CD4-positive, alpha-beta T cell (primary cell): ENCODE measurements at regions of chr6 and their contacts with region 1.

Region 1: GRCh38 chr6:167291623-167292300 is 647 bp downstream of the UNC93A start:
- DNase-seq: no peak
- ATAC-seq: no peak
- H3K4me3 ChIP-seq: no peak overlapping the region
- H3K4me3 Mint-ChIP-seq: no peak overlapping the region
- H3K27ac ChIP-seq: no peak overlapping the region
- H3K27ac Mint-ChIP-seq: no peak overlapping the region
- H3K4me1 ChIP-seq: no peaks in the 10 kb centered on the region
- H3K4me1 Mint-ChIP-seq: peaks cover 3% of the 10 kb centered on the region
- H3K27me3 ChIP-seq: no peaks in the 10 kb centered on the region
- H3K27me3 Mint-ChIP-seq: peaks cover 4% of the 10 kb centered on the region
- CTCF ChIP-seq: no peak

Region 2: GRCh38 chr6:167056370-167056769 is 235.4 kb before region 1 on chr6:
- CTCF ChIA-PET with region 1: no interaction called
- POLR2A ChIA-PET with region 1: no interaction called
- intact Hi-C with region 1: no loop called
- DNase-seq: peak in 5 of 14 experiments; percentile 23 to 81 (median 71)
- ATAC-seq: peak; percentile 87
- H3K4me3 ChIP-seq: no peak overlapping the region
- H3K4me3 Mint-ChIP-seq: peak overlapping the region; percentile 68
- H3K27ac ChIP-seq: no peak overlapping the region
- H3K27ac Mint-ChIP-seq: peak overlapping the region; percentile 84
- H3K4me1 ChIP-seq: peaks cover 49% of the 10 kb centered on the region
- H3K4me1 Mint-ChIP-seq: peaks cover 59% of the 10 kb centered on the region
- H3K27me3 ChIP-seq: no peaks in the 10 kb centered on the region
- H3K27me3 Mint-ChIP-seq: no peaks in the 10 kb centered on the region
- CTCF ChIP-seq: no peak

Region 3: GRCh38 chr6:167079853-167080297 is 211.9 kb before region 1 on chr6:
- CTCF ChIA-PET with region 1: no interaction called
- POLR2A ChIA-PET with region 1: no interaction called
- intact Hi-C with region 1: no loop called
- DNase-seq: peak in 10 of 14 experiments; percentile 26 to 88 (median 46)
- ATAC-seq: peak; percentile 99
- H3K4me3 ChIP-seq: peak overlapping the region; percentile 14
- H3K4me3 Mint-ChIP-seq: peak overlapping the region; percentile 42
- H3K27ac ChIP-seq: no peak overlapping the region
- H3K27ac Mint-ChIP-seq: peak overlapping the region; percentile 64
- H3K4me1 ChIP-seq: peaks cover 17% of the 10 kb centered on the region
- H3K4me1 Mint-ChIP-seq: peaks cover 23% of the 10 kb centered on the region
- H3K27me3 ChIP-seq: peaks cover 0 to 3% of the 10 kb centered on the region in 2 experiments
- H3K27me3 Mint-ChIP-seq: no peaks in the 10 kb centered on the region
- CTCF ChIP-seq: no peak

Region 4: GRCh38 chr6:167219967-167220512 is 71.7 kb before region 1 on chr6:
- CTCF ChIA-PET with region 1: no interaction called
- POLR2A ChIA-PET with region 1: no interaction called
- intact Hi-C with region 1: loop called in 1 of 2 experiments (anchors 2 kb)
- DNase-seq: no peak
- ATAC-seq: no peak
- H3K4me3 ChIP-seq: no peak overlapping the region
- H3K4me3 Mint-ChIP-seq: no peak overlapping the region
- H3K27ac ChIP-seq: no peak overlapping the region
- H3K27ac Mint-ChIP-seq: no peak overlapping the region
- H3K4me1 ChIP-seq: no peaks in the 10 kb centered on the region
- H3K4me1 Mint-ChIP-seq: peaks cover 4% of the 10 kb centered on the region
- H3K27me3 ChIP-seq: peaks cover 0 to under 1% of the 10 kb centered on the region in 2 experiments
- H3K27me3 Mint-ChIP-seq: no peaks in the 10 kb centered on the region
- CTCF ChIP-seq: no peak

Region 5: GRCh38 chr6:167350731-167351655 is 59.2 kb after region 1 on chr6:
- CTCF ChIA-PET with region 1: no interaction called
- POLR2A ChIA-PET with region 1: no interaction called
- intact Hi-C with region 1: loop called in 1 of 2 experiments (anchors 5 kb)
- DNase-seq: peak; percentile 70 to 91 (median 78)
- ATAC-seq: peak; percentile 79
- H3K4me3 ChIP-seq: peak overlapping the region; percentile 67
- H3K4me3 Mint-ChIP-seq: peak overlapping the region; percentile 87
- H3K27ac ChIP-seq: no peak overlapping the region
- H3K27ac Mint-ChIP-seq: peak overlapping the region; percentile 72
- H3K4me1 ChIP-seq: peaks cover 21% of the 10 kb centered on the region
- H3K4me1 Mint-ChIP-seq: peaks cover 23% of the 10 kb centered on the region
- H3K27me3 ChIP-seq: peaks cover 0 to 3% of the 10 kb centered on the region in 2 experiments
- H3K27me3 Mint-ChIP-seq: peaks cover 5% of the 10 kb centered on the region
- CTCF ChIP-seq: peak; percentile 91

Region 6: DNA sequence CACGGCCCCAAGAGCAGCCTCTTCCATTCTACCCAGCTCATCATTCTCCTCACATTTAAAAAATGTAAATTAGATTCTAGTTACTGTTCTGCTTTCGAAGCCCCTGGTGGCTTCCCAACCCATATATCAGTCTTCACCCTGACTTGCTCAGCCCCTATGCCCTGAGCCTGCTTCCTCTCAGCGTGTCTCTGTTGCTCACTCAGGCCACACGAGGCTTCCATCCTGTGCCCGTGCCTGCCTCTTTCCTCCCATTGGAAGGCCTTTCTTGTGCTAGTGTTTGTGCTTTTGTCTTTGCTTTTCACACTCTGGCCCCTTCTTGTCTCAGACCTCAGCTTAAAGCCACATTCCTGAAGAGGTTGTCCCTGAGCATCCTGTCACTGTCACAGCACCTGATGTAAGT is 613.0 kb after region 1 on chr6:
- CTCF ChIA-PET with region 1: no interaction called
- POLR2A ChIA-PET with region 1: no interaction called
- intact Hi-C with region 1: loop called in 1 of 2 experiments (anchors 5 kb)
- DNase-seq: no peak
- ATAC-seq: no peak
- H3K4me3 ChIP-seq: no peak overlapping the region
- H3K4me3 Mint-ChIP-seq: no peak overlapping the region
- H3K27ac ChIP-seq: no peak overlapping the region
- H3K27ac Mint-ChIP-seq: no peak overlapping the region
- H3K4me1 ChIP-seq: no peaks in the 10 kb centered on the region
- H3K4me1 Mint-ChIP-seq: no peaks in the 10 kb centered on the region
- H3K27me3 ChIP-seq: no peaks in the 10 kb centered on the region
- H3K27me3 Mint-ChIP-seq: no peaks in the 10 kb centered on the region
- CTCF ChIP-seq: no peak